Caco-2 (cell line): ENCODE measurements at regions of chr11 and their contacts with region 1.

Region 1: GRCh38 chr11:105673089-105673488 is 63.2 kb downstream of the GRIA4 start:
- DNase-seq: peak; percentile 60 to 70
- H3K4me3 ChIP-seq: no peak overlapping the region
- H3K4me3 Mint-ChIP-seq: no peak overlapping the region
- H3K27ac Mint-ChIP-seq: no peak overlapping the region
- H3K4me1 ChIP-seq: no peaks in the 10 kb centered on the region
- H3K4me1 Mint-ChIP-seq: no peaks in the 10 kb centered on the region
- H3K27me3 ChIP-seq: no peaks in the 10 kb centered on the region
- H3K27me3 Mint-ChIP-seq: peaks cover 4% of the 10 kb centered on the region
- CTCF ChIP-seq: no peak

Region 2: DNA sequence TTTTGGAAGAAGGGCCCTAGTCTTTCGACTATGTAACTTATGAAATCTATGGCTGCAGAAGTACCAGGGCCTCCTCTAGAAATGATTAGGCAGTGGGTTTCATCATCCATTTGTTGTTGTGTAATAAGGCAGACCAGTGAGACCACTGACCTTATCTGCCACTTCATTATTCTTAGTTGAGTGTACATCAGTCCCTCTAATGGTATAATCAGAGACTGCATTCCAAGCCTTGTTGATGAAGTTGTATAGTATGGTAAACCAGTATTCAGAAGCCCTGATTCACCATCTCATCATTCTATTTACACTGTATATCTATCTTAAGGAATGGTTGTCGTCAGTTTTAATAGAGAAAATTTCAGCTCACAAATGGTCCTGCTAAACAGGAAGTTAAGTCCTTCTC is 95.4 kb before region 1 on chr11:
- CTCF ChIA-PET with region 1: no interaction called
- POLR2A ChIA-PET with region 1: no interaction called
- intact Hi-C with region 1: no loop called
- DNase-seq: peak in 1 of 2 experiments; percentile 38
- H3K4me3 ChIP-seq: no peak overlapping the region
- H3K4me3 Mint-ChIP-seq: no peak overlapping the region
- H3K27ac Mint-ChIP-seq: no peak overlapping the region
- H3K4me1 ChIP-seq: no peaks in the 10 kb centered on the region
- H3K4me1 Mint-ChIP-seq: no peaks in the 10 kb centered on the region
- H3K27me3 ChIP-seq: no peaks in the 10 kb centered on the region; the same call in 1 of the 2 replicates
- H3K27me3 Mint-ChIP-seq: no peaks in the 10 kb centered on the region
- CTCF ChIP-seq: peak; percentile 42 to 59

Region 3: DNA sequence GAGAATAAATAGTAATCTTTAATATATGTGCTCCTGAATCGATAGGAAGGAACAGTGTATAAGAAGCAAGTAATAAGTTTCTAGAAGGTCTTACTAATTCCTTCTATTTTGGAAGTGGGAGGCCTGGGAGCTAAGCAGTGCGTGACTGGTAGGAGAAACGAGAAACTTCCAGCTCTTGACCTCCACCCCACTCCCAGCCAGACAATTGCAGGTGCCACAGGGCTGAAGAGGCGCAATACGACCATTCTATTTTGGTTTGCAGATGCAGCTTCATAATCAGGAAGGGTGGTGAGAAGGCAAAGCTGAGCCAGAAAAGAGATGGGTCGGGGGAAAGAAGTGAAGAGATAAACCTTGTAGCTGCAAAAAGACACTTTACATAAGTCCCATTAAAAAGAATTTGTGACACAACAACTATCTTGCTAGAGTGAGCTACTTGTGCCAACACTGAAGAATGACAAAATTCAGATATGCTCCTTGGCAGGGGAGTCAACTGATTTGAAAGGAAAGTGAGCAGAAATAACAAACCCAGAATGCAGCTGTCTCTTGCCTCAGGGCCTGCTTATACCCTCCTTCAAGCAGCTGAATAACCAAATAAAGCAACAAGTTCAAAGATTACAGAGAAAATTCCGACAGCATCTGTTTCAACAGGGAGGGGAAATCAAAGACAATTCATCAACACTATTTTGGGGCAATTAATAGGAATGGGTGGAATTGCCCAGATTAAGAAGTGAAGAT is 28.1 kb before region 1 on chr11:
- CTCF ChIA-PET with region 1: no interaction called
- POLR2A ChIA-PET with region 1: no interaction called
- intact Hi-C with region 1: loop called (anchors 1 kb)
- DNase-seq: no peak
- H3K4me3 ChIP-seq: no peak overlapping the region
- H3K4me3 Mint-ChIP-seq: no peak overlapping the region
- H3K27ac Mint-ChIP-seq: no peak overlapping the region
- H3K4me1 ChIP-seq: no peaks in the 10 kb centered on the region
- H3K4me1 Mint-ChIP-seq: no peaks in the 10 kb centered on the region
- H3K27me3 ChIP-seq: no peaks in the 10 kb centered on the region
- H3K27me3 Mint-ChIP-seq: no peaks in the 10 kb centered on the region
- CTCF ChIP-seq: no peak